Activated CD8-positive, alpha-beta T cell treated with anti-CD3 and anti-CD28 coated beads, Interleukin-2, amount 10 ng/mL, durations not matched to agents 7 days and 5 days (primary cell): ENCODE measurements at regions of chr5 and their contacts with region 1.

Region 1: DNA sequence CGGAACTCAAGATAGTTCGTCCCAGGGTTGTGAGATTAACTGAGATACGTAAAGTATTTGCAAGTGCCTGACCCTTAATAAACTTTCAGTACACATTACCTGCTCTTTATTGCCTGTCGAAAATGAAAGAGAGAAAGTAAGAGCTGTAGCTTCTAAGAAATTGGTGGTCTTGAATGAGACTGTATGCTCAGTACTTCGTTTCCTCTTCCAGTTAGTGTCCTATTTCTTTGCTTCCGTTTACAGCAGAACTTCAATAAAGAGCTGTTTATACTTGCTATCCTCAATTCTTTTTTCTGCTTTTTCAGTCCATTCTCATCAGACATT is 534 bp downstream of the SRFBP1 start:
- DNase-seq: no peak
- ATAC-seq: peak; percentile 38
- H3K4me3 Mint-ChIP-seq: peak overlapping the region; percentile 97
- H3K27ac Mint-ChIP-seq: peak overlapping the region; percentile 92
- H3K4me1 Mint-ChIP-seq: peaks cover 25% of the 10 kb centered on the region
- H3K27me3 Mint-ChIP-seq: peaks cover under 1% of the 10 kb centered on the region

Region 2: GRCh38 chr5:121937762-121938161 is 24.5 kb before region 1 on chr5:
- CTCF ChIA-PET with region 1: no interaction called
- POLR2A ChIA-PET with region 1: no interaction called
- DNase-seq: no peak
- ATAC-seq: no peak
- H3K4me3 Mint-ChIP-seq: no peak overlapping the region
- H3K27ac Mint-ChIP-seq: no peak overlapping the region
- H3K4me1 Mint-ChIP-seq: no peaks in the 10 kb centered on the region
- H3K27me3 Mint-ChIP-seq: peaks cover 4% of the 10 kb centered on the region

Region 3: GRCh38 chr5:121949867-121950266 is 12.4 kb before region 1 on chr5:
- CTCF ChIA-PET with region 1: interaction called, 20 read pairs
- POLR2A ChIA-PET with region 1: no interaction called
- DNase-seq: peak; percentile 34
- ATAC-seq: no peak
- H3K4me3 Mint-ChIP-seq: no peak overlapping the region
- H3K27ac Mint-ChIP-seq: no peak overlapping the region
- H3K4me1 Mint-ChIP-seq: no peaks in the 10 kb centered on the region
- H3K27me3 Mint-ChIP-seq: peaks cover 4% of the 10 kb centered on the region